ENCODE measurements at regions of chr15 and their contacts with region 1.

Region 1: DNA sequence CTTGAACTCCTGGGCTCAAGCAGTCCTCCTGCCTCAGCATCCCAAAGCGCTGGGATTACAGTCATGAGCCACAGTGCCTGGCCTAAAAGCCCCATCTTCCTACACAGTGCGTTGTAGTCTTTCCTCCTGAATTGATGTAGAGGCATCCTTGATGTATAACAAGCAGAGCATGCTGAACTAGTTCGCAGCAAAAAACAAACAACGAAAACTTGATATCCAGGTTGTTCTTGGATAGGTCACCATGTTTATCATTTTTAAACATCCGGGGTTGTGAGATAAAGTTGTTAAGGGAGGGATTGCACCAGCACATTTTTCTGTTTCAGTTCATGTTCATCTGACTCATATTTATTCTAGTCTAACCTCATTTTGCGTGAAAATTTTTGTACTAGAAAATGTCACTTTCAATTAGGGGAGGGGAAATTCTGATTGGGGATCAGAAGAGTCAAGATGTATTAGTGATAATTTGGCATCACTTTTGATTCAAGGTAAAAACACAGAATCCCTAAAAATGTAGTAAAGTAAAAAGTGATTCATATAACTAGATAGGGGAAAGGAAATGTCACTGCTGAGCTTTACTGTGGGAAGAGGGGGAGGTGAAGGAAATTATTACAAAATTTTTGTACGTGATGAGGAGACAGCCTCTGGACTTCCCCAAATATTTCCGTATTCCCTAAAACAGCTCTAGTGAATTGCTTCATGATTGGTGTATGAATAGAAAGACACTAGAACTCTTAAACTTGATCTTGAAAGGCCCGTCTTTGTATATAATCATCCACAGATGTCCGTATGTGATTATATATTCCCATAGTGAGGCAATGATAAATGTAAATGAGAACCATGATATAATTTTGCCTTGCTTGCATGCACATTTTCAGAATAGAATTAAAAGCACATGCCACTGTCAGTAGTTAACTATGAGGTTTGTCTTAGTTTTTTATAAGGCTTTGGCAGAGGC is 22.9 kb downstream of the RAB8B start:
- DNase-seq: no peak
- H3K4me3 Mint-ChIP-seq: peak overlapping the region; percentile 24
- H3K27ac Mint-ChIP-seq: peak overlapping the region; percentile 87
- H3K4me1 Mint-ChIP-seq: peaks cover 73% of the 10 kb centered on the region
- H3K27me3 Mint-ChIP-seq: no peaks in the 10 kb centered on the region

Region 2: GRCh38 chr15:63093486-63094205 is 118.7 kb before region 1 on chr15:
- CTCF ChIA-PET with region 1: no interaction called
- POLR2A ChIA-PET with region 1: no interaction called
- DNase-seq: peak; percentile 77
- H3K4me3 Mint-ChIP-seq: no peak overlapping the region
- H3K27ac Mint-ChIP-seq: no peak overlapping the region
- H3K4me1 Mint-ChIP-seq: peaks cover 11% of the 10 kb centered on the region
- H3K27me3 Mint-ChIP-seq: peaks cover 3% of the 10 kb centered on the region

Region 3: DNA sequence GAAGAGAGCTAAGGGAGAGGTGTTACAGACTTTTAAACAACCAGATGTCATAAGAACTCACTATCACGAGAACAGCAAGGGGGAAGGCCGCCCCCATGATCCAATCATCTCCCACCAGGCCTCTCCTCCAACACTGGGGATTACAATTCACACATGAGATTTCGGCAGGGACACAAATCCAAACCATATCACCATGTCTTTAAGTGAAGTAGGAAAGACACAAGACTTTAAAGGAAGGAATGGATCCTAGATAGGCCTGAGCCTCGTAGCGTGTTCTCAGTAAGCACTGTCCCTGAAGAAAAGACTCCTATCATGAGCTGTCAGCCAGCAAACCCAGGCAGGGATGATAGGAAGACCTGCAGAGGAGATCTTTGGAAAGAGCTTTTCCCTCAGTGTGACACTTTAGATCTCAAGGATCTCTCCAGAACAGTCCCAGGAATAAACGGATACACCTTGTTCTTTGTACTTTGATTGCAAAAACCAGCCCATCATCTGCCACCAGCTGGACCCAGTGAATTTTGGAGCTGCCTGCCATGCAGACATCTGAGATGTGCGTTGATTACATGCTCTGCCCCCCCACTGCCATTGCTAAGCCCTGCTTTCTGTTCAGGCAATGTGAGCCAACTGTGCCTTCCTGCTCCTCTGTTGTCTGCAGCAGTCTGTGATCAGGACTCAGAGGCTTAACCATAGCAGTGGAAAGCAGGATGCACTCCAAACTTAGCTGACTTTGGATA is 39.8 kb before region 1 on chr15:
- CTCF ChIA-PET with region 1: no interaction called
- POLR2A ChIA-PET with region 1: no interaction called
- DNase-seq: no peak
- H3K4me3 Mint-ChIP-seq: no peak overlapping the region
- H3K27ac Mint-ChIP-seq: no peak overlapping the region
- H3K4me1 Mint-ChIP-seq: peaks cover 4% of the 10 kb centered on the region
- H3K27me3 Mint-ChIP-seq: no peaks in the 10 kb centered on the region

Region 4: DNA sequence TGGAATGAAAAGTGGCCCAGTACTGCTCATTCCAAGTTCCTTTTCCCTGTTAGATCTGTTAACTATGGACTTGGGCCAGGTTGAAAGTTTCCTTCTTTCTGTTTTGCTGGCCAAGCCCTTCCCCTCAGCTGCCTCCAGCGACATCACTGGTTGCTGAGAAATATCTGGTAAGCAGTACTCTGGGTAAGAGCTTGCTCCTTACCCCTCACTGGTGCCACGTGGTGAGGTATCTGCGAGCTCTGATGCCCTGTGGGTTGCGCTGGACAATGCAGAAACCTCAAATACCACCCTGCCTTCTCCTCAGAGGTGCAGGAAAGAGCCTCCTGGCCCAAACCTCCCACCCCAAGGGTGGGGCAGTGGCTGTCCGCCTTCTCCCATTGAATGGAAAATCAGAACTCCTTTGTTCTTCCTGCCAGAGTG is 22.1 kb after region 1 on chr15:
- CTCF ChIA-PET with region 1: no interaction called
- POLR2A ChIA-PET with region 1: interaction called, 22 read pairs
- DNase-seq: no peak
- H3K4me3 Mint-ChIP-seq: no peak overlapping the region
- H3K27ac Mint-ChIP-seq: no peak overlapping the region
- H3K4me1 Mint-ChIP-seq: peaks cover 62% of the 10 kb centered on the region
- H3K27me3 Mint-ChIP-seq: no peaks in the 10 kb centered on the region

Measured in activated CD4-positive, alpha-beta memory T cell treated with anti-CD3 and anti-CD28 coated beads, Interleukin-2, amount 10 ng/mL, durations not matched to agents 7 days and 5 days (primary cell).